ENCODE measurements at regions of chr1 and their contacts with region 1.

Region 1: DNA sequence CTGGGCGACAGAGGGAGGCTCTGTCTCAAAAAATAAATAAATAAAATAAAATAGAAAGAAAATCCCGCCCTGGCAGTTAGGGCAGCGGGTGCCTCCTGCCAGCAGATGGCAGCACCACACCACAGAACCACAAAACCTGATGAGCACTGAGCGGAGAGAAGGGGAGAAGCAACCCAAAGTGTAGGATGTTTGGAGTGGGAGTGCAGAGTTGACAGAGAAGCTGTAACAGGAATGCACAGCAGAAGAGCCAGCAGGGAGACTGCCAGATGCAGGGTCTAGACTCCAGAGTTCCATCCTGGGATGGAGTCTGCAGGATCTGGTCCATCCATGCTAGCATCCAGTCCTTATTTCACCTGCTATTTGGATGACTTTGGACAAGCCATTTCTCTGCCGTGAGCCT is 29.7 kb upstream of the KIRREL1 start:
- DNase-seq: peak; percentile 63 to 78
- ATAC-seq: peak; percentile 53 to 73 (median 62)
- H3K4me3 ChIP-seq: no peak overlapping the region
- H3K27ac ChIP-seq: no peak overlapping the region
- H3K4me1 ChIP-seq: no peaks in the 10 kb centered on the region
- H3K27me3 ChIP-seq: peaks cover 0 to 9% (median 0%) of the 10 kb centered on the region in 3 donors
- CTCF ChIP-seq: peak; percentile 87

Region 2: GRCh38 chr1:158124999-158125398 is 161.3 kb after region 1 on chr1:
- intact Hi-C with region 1: loop called (anchors 1 to 5 kb)
- DNase-seq: peak; percentile 78 to 87
- ATAC-seq: peak; percentile 88 to 98 (median 94)
- H3K4me3 ChIP-seq: no peak overlapping the region
- H3K27ac ChIP-seq: no peak overlapping the region
- H3K4me1 ChIP-seq: no peaks in the 10 kb centered on the region
- H3K27me3 ChIP-seq: peaks cover 0 to 14% (median 0%) of the 10 kb centered on the region in 3 donors
- CTCF ChIP-seq: peak; percentile 90

Region 3: DNA sequence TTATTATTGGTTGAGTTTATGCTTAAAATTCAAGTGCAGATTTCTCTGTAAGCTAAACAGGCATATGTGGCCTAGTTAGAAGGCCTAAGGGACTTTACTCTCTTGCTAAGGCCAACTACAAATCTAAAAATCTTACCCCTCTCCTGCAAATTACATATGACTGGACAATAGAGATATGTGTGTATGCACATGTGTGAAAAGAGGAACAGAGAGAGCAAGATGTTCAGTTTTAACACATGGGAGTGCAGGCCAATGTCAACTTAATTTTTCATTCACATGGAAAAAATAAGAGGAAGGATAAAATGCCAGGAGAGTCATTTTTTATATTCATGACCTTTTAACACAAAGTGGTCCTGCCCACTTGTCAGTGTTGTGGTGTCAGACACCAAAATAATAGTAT is 453.9 kb after region 1 on chr1:
- intact Hi-C with region 1: no loop called
- DNase-seq: no peak
- ATAC-seq: no peak
- H3K4me3 ChIP-seq: no peak overlapping the region
- H3K27ac ChIP-seq: no peak overlapping the region
- H3K4me1 ChIP-seq: no peaks in the 10 kb centered on the region
- H3K27me3 ChIP-seq: no peaks in the 10 kb centered on the region
- CTCF ChIP-seq: no peak

Measured in psoas muscle (tissue), 8 donors.